Transverse colon (tissue), 4 donors: ENCODE measurements at regions of chr1 and their contacts with region 1.

Region 1: DNA sequence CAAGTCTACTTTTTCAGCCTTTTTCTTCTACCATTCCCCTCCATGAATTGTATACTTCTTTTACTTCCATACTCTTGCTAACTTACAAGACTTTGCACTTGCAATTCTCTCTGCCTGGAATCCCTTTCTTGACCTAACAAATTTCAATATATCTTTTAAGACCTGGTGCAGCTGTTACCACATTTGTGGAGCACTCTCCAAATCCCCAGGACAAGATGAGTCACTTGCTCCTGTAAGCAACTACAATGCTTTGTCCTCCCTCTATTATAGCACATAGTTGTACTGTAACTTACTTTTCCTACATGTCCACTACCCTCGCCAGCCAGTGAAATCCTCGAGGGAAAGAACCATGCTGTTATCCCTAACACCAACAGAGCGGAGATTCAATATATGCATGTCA is 43.1 kb downstream of the WARS2 start:
- DNase-seq: no peak
- H3K4me3 ChIP-seq: no peak overlapping the region
- H3K27ac ChIP-seq: no peak overlapping the region
- H3K4me1 ChIP-seq: peaks cover 0 to 2% (median 0%) of the 10 kb centered on the region in 4 donors
- H3K27me3 ChIP-seq: no peaks in the 10 kb centered on the region
- CTCF ChIP-seq: no peak
- EP300 ChIP-seq: no peak
- POLR2A ChIP-seq: no peak

Region 2: GRCh38 chr1:119140177-119141019 is 43.0 kb after region 1 on chr1 and contains the start of gene WARS2:
- in situ Hi-C with region 1: no loop called
- intact Hi-C with region 1: loop called (anchors 10 kb)
- DNase-seq: peak; percentile 96
- H3K4me3 ChIP-seq: peak within 1 kb of the TSS; percentile 23 to 70 (median 54)
- H3K27ac ChIP-seq: peak within 1 kb of the TSS; percentile 93 to 98 (median 96)
- H3K4me1 ChIP-seq: peaks cover 0 to 37% (median 13%) of the 10 kb centered on the region in 4 donors
- H3K27me3 ChIP-seq: no peaks in the 10 kb centered on the region
- CTCF ChIP-seq: no peak
- EP300 ChIP-seq: no peak
- POLR2A ChIP-seq: peak; percentile 86
- total RNA-seq, gene WARS2: 4.6 to 18.6 (median 10.3) TPM